ENCODE measurements at regions of chr16 and their contacts with region 1.

Region 1: GRCh38 chr16:50696575-50697420 is 3.4 kb downstream of the NOD2 start:
- DNase-seq: peak; percentile 93
- ATAC-seq: peak; percentile 55

Region 2: GRCh38 chr16:50591800-50592771 is 104.7 kb before region 1 on chr16:
- intact Hi-C with region 1: no loop called
- DNase-seq: peak; percentile 84
- ATAC-seq: peak; percentile 96

Region 3: GRCh38 chr16:50657241-50657640 is 39.6 kb before region 1 on chr16:
- intact Hi-C with region 1: no loop called
- DNase-seq: no peak
- ATAC-seq: no peak

Region 4: GRCh38 chr16:50741808-50742575 is 45.2 kb after region 1 on chr16 and contains the start of gene CYLD:
- intact Hi-C with region 1: loop called (anchors 5 kb)
- DNase-seq: peak; percentile 100
- ATAC-seq: peak; percentile 99
- total RNA-seq, gene CYLD: 27.5 TPM